ENCODE measurements at regions of chr11 and their contacts with region 1.

Region 1: GRCh38 chr11:22304337-22304961 is 33.7 kb upstream of the SLC17A6 start:
- DNase-seq: peak; percentile 20 to 32 (median 24)
- ATAC-seq: no peak
- H3K4me3 ChIP-seq: no peak overlapping the region
- H3K27ac ChIP-seq: no peak overlapping the region
- H3K4me1 ChIP-seq: no peaks in the 10 kb centered on the region
- H3K27me3 ChIP-seq: no peaks in the 10 kb centered on the region
- CTCF ChIP-seq: peak; percentile 21 to 69 (median 41); a peak in 5 of 6 replicates
- EP300 ChIP-seq: no peak
- POLR2A ChIP-seq: no peak
- RAD21 ChIP-seq: peak; percentile 77 to 79

Region 2: GRCh38 chr11:21866781-21867180 is 437.7 kb before region 1 on chr11:
- CTCF ChIA-PET with region 1: no interaction called
- POLR2A ChIA-PET with region 1: no interaction called
- in situ Hi-C with region 1: no loop called
- intact Hi-C with region 1: no loop called
- DNase-seq: no peak
- ATAC-seq: no peak
- H3K4me3 ChIP-seq: no peak overlapping the region
- H3K27ac ChIP-seq: no peak overlapping the region
- H3K4me1 ChIP-seq: no peaks in the 10 kb centered on the region
- H3K27me3 ChIP-seq: no peaks in the 10 kb centered on the region
- CTCF ChIP-seq: no peak
- EP300 ChIP-seq: no peak
- POLR2A ChIP-seq: no peak
- RAD21 ChIP-seq: no peak

Region 3: DNA sequence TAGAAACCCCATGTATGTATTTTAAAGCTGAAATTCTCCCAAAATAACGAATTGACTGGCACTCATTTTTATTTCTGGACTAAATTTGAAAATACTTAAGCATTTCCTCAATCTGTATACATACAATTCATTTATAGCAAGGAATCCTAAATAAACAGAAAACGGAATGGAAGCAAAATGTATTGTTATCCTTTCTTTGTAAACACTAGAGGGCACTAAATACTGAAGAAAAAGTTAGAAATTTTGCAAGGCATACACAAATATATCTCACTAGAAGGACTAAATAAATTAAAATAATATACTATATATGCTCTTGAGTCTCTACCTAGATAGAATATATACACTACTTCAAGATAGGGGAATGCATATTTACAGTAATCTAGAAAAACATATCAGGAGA is 134.6 kb before region 1 on chr11:
- CTCF ChIA-PET with region 1: interaction called, 6 read pairs
- POLR2A ChIA-PET with region 1: no interaction called
- in situ Hi-C with region 1: no loop called
- intact Hi-C with region 1: loop called (anchors 10 kb)
- DNase-seq: no peak
- ATAC-seq: no peak
- H3K4me3 ChIP-seq: no peak overlapping the region
- H3K27ac ChIP-seq: no peak overlapping the region
- H3K4me1 ChIP-seq: no peaks in the 10 kb centered on the region
- H3K27me3 ChIP-seq: no peaks in the 10 kb centered on the region
- CTCF ChIP-seq: peak in 1 of 3 experiments; percentile 30; a peak in 2 of 6 replicates
- EP300 ChIP-seq: no peak
- POLR2A ChIP-seq: no peak
- RAD21 ChIP-seq: peak in 1 of 2 experiments; percentile 45; a peak in 2 of 4 replicates

Region 4: GRCh38 chr11:22244986-22245592 is 59.4 kb before region 1 on chr11:
- CTCF ChIA-PET with region 1: interaction called, 7 read pairs
- POLR2A ChIA-PET with region 1: no interaction called
- in situ Hi-C with region 1: no loop called
- intact Hi-C with region 1: loop called (anchors 5 kb)
- DNase-seq: peak in 3 of 4 experiments; percentile 6 to 22 (median 7)
- ATAC-seq: peak; percentile 66
- H3K4me3 ChIP-seq: no peak overlapping the region
- H3K27ac ChIP-seq: no peak overlapping the region
- H3K4me1 ChIP-seq: no peaks in the 10 kb centered on the region
- H3K27me3 ChIP-seq: no peaks in the 10 kb centered on the region
- CTCF ChIP-seq: peak; percentile 14 to 44 (median 34); a peak in 3 of 6 replicates
- EP300 ChIP-seq: no peak
- POLR2A ChIP-seq: no peak
- RAD21 ChIP-seq: peak; percentile 44 to 65

Region 5: DNA sequence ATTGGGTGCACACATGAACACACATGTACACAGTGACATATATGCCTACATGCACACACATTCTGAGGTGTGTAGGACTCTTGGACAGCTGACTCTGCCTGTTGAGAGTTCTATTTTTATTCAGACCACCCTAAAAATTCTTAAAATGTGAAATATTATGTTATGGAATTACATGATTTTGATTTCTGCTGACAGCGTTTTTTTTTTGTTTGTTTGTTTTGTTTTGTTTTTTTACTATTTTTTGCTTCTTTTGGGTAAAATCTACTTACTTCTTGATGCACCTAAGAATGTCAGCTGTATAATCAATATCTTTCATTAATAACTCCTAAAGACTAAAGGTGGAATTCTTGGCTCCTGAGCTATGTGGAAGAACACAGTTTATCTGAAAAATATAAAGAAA is 47.6 kb before region 1 on chr11:
- CTCF ChIA-PET with region 1: no interaction called
- POLR2A ChIA-PET with region 1: no interaction called
- in situ Hi-C with region 1: no loop called
- intact Hi-C with region 1: no loop called
- DNase-seq: no peak
- ATAC-seq: no peak
- H3K4me3 ChIP-seq: no peak overlapping the region
- H3K27ac ChIP-seq: no peak overlapping the region
- H3K4me1 ChIP-seq: no peaks in the 10 kb centered on the region
- H3K27me3 ChIP-seq: no peaks in the 10 kb centered on the region
- CTCF ChIP-seq: no peak
- EP300 ChIP-seq: no peak
- POLR2A ChIP-seq: no peak
- RAD21 ChIP-seq: no peak

Region 6: GRCh38 chr11:22508665-22509064 is 204.2 kb after region 1 on chr11:
- CTCF ChIA-PET with region 1: no interaction called
- POLR2A ChIA-PET with region 1: no interaction called
- in situ Hi-C with region 1: no loop called
- intact Hi-C with region 1: no loop called
- DNase-seq: no peak
- ATAC-seq: no peak
- H3K4me3 ChIP-seq: no peak overlapping the region
- H3K27ac ChIP-seq: no peak overlapping the region
- H3K4me1 ChIP-seq: no peaks in the 10 kb centered on the region
- H3K27me3 ChIP-seq: no peaks in the 10 kb centered on the region
- CTCF ChIP-seq: no peak
- EP300 ChIP-seq: no peak
- POLR2A ChIP-seq: no peak
- RAD21 ChIP-seq: no peak

Measured in K562 (cell line).